ENCODE measurements at regions of chr19 and their contacts with region 1.

Region 1: GRCh38 chr19:45235485-45235884 is 9.7 kb downstream of the EXOC3L2 start:
- DNase-seq: no peak
- ATAC-seq: no peak
- H3K4me3 ChIP-seq: no peak overlapping the region
- H3K27ac ChIP-seq: no peak overlapping the region
- H3K4me1 ChIP-seq: no peaks in the 10 kb centered on the region
- H3K27me3 ChIP-seq: peaks cover 21 to 27% (median 23%) of the 10 kb centered on the region in 3 donors
- CTCF ChIP-seq: no peak
- POLR2A ChIP-seq: no peak

Region 2: DNA sequence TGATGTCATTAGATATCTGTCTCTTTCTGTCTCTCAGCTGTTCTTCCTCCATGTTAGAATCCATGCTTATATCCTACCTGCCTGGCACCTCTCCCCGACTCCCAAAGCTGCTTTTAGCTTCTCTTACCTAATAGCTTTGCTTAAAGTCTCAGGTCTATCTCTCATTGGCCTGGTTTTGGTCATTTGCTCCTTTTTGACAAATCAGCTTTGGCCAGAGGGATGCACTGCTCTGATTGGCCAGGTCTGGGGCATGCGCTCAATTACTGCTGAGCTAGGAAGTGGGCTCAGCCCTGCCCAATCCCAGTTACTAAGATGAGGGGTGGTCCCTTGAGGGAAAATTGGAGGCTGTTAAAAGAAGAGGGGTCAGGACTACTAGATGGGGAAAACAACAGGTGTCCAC is 208.1 kb before region 1 on chr19:
- in situ Hi-C with region 1: no loop called
- intact Hi-C with region 1: no loop called
- DNase-seq: no peak
- ATAC-seq: no peak
- H3K4me3 ChIP-seq: no peak overlapping the region
- H3K27ac ChIP-seq: no peak overlapping the region
- H3K4me1 ChIP-seq: no peaks in the 10 kb centered on the region
- H3K27me3 ChIP-seq: no peaks in the 10 kb centered on the region
- CTCF ChIP-seq: no peak
- POLR2A ChIP-seq: no peak

Region 3: GRCh38 chr19:45200568-45200994 is 34.9 kb before region 1 on chr19:
- in situ Hi-C with region 1: loop called in 1 of 4 experiments (anchors 5 kb)
- intact Hi-C with region 1: no loop called
- DNase-seq: no peak
- ATAC-seq: no peak
- H3K4me3 ChIP-seq: no peak overlapping the region
- H3K27ac ChIP-seq: no peak overlapping the region
- H3K4me1 ChIP-seq: no peaks in the 10 kb centered on the region
- H3K27me3 ChIP-seq: no peaks in the 10 kb centered on the region
- CTCF ChIP-seq: peak in 3 of 5 experiments; percentile 13 to 20 (median 15)
- POLR2A ChIP-seq: no peak

Region 4: GRCh38 chr19:45255611-45256157 is 20.2 kb after region 1 on chr19:
- in situ Hi-C with region 1: no loop called
- intact Hi-C with region 1: no loop called
- DNase-seq: no peak
- ATAC-seq: no peak
- H3K4me3 ChIP-seq: no peak overlapping the region
- H3K27ac ChIP-seq: no peak overlapping the region
- H3K4me1 ChIP-seq: peaks cover 16 to 17% of the 10 kb centered on the region in 2 donors
- H3K27me3 ChIP-seq: no peaks in the 10 kb centered on the region
- CTCF ChIP-seq: no peak
- POLR2A ChIP-seq: no peak